Posterior cingulate gyrus (tissue), 11 donors: ENCODE measurements at regions of chr19 and their contacts with region 1.

Region 1: DNA sequence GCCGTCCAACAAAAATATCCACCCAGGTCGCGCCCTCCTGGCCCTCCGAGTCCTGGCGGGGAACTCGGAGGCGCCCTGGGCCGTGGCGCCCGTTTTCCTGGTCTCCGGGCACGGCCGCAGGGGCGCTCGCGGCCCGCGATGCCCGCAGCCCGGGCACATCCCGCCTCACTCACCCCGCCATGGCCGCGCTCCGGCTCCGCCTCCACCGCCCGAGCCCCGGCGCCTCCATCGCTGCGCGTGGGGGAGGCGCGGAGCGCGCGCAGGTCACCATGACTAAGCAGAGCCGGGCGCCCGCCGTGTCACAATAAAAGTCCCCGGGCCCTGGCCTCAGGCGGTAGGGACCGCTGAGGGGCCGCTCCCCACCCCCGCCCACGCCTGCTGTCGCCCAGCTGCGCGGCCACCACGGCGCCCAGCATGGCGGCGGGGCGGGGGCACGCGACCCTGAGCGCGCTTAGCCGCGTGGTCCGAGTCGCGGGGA is 593 bp downstream of the KEAP1 start:
- DNase-seq: peak; percentile 83 to 98 (median 90)

Region 2: DNA sequence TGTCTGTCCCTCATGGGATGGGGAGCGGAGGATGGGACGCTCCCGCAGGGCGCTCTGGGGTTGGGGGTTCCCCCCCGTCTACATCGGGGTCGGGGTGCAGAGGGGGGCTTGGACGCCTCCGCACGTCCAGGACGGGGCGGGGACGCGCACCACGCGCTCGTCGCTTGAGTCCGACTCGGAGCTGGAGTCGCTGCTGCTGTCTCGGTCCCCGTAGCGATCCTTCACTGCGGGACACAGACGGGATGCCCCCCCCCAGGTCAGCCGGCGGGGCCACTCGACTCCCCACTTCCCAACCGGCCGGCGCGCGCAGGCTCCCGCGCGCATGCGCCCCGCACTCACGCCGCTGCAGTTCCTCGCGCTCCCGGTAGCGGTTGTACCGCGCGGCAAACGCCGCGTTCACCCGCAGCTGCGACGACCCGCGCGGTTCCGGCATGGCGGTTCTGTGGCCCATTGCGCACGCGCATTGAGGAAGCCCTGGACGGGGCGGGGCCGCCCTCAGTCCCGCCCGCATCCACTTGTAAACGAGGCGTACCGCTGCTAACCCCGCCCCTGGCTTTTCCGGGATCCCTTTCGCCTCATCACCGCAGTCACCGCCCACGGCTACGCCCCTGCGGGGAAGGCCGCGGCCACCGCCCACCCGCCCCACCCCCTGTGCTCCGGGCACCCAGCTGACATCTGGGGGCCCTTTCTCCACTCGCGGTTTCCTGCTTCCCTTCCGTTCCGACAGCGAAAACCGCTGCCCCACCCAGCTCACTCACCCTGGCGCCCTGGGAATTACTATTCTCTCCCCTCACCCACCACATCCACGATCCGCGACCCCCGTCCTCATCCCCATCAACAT is 63.2 kb after region 1 on chr19 and contains the start of gene KRI1:
- intact Hi-C with region 1: loop called (anchors 5 kb)
- DNase-seq: peak; percentile 94 to 100 (median 96)